ENCODE measurements at regions of chr20 and their contacts with region 1.

Region 1: DNA sequence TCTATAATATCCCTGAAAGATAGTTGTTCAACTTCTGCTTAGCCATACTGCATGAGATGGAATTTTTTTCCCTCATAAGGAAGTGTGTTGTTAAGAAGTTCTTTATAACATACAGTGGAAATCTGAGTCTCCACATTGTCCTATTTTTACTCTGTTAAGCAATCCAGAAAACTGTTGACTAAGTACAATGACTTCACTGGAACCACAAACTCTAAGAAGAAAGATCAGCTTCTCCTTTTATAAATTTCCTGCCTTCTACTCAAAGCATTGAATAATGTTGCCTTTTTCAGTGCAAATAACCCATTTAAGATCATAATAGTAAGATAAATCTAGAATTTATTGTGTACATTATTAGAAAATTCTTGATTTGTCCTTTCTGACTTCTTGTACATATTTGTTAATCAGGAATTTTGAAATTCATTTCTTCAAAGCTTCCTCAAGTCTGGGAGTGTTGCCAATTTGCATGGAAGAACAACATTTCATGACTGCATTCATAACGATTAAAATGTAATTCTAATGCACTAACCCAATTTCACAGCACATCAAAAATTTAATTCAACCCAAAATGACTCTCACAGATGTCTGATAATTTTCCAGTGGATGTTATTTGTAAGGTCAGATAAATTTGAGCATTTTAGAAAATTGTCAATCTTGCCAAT is 45.6 kb upstream of the ANKEF1 start:
- DNase-seq: no peak
- H3K4me3 ChIP-seq: no peak overlapping the region
- H3K27ac ChIP-seq: peak overlapping the region in 1 of 4 donors; percentile 12
- H3K4me1 ChIP-seq: peaks cover 0 to 2% (median 0%) of the 10 kb centered on the region in 4 donors
- H3K27me3 ChIP-seq: no peaks in the 10 kb centered on the region
- CTCF ChIP-seq: no peak
- EP300 ChIP-seq: no peak
- POLR2A ChIP-seq: no peak

Region 2: GRCh38 chr20:10427060-10427692 is 438.0 kb after region 1 on chr20:
- in situ Hi-C with region 1: loop called in 2 of 4 experiments (anchors 10 to 25 kb)
- intact Hi-C with region 1: no loop called
- DNase-seq: peak; percentile 41
- H3K4me3 ChIP-seq: no peak overlapping the region
- H3K27ac ChIP-seq: no peak overlapping the region
- H3K4me1 ChIP-seq: peaks cover 6 to 35% (median 13%) of the 10 kb centered on the region in 4 donors
- H3K27me3 ChIP-seq: no peaks in the 10 kb centered on the region
- CTCF ChIP-seq: peak; percentile 55 to 76 (median 71)
- EP300 ChIP-seq: no peak
- POLR2A ChIP-seq: no peak